ENCODE measurements at regions of chr15 and their contacts with region 1.

Region 1: GRCh38 chr15:65355173-65355987 is 22.4 kb downstream of the IGDCC3 start:
- DNase-seq: peak; percentile 74 to 77
- H3K4me3 ChIP-seq: peak overlapping the region; percentile 85
- H3K4me3 Mint-ChIP-seq: peak overlapping the region; percentile 75
- H3K27ac Mint-ChIP-seq: peak overlapping the region; percentile 86
- H3K4me1 ChIP-seq: peaks cover 20% of the 10 kb centered on the region
- H3K4me1 Mint-ChIP-seq: peaks cover 17% of the 10 kb centered on the region
- H3K27me3 ChIP-seq: no peaks in the 10 kb centered on the region
- H3K27me3 Mint-ChIP-seq: no peaks in the 10 kb centered on the region
- CTCF ChIP-seq: no peak

Region 2: DNA sequence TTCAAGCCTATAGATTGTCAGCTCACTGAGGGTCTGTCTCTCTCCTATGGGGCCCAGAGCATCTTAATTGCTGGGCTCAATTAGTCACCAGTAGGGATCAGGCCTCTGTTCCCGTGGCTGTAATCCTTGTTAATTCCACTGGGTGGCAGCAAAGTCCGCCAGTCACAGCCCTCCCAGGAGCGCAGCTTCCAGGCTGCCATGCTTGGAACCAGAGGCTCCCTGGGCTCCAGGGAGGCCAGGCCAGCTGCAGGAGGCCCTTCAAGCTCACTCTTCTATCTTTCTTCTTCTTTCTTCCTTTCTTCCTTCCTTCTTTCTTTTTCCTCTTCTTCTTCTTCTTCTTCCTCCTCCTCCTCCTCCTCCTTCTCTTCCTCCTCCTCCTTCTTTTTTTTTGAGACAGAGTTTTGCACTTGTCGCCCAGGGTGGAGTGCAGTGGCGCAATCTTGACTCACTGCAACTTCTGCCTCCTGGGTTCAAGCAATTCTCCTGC is 36.5 kb before region 1 on chr15:
- CTCF ChIA-PET with region 1: no interaction called
- POLR2A ChIA-PET with region 1: no interaction called
- intact Hi-C with region 1: loop called (anchors 2 kb)
- DNase-seq: peak; percentile 78 to 87
- H3K4me3 ChIP-seq: no peak overlapping the region
- H3K4me3 Mint-ChIP-seq: no peak overlapping the region
- H3K27ac Mint-ChIP-seq: no peak overlapping the region
- H3K4me1 ChIP-seq: no peaks in the 10 kb centered on the region
- H3K4me1 Mint-ChIP-seq: no peaks in the 10 kb centered on the region
- H3K27me3 ChIP-seq: no peaks in the 10 kb centered on the region
- H3K27me3 Mint-ChIP-seq: no peaks in the 10 kb centered on the region
- CTCF ChIP-seq: peak; percentile 71 to 91

Region 3: DNA sequence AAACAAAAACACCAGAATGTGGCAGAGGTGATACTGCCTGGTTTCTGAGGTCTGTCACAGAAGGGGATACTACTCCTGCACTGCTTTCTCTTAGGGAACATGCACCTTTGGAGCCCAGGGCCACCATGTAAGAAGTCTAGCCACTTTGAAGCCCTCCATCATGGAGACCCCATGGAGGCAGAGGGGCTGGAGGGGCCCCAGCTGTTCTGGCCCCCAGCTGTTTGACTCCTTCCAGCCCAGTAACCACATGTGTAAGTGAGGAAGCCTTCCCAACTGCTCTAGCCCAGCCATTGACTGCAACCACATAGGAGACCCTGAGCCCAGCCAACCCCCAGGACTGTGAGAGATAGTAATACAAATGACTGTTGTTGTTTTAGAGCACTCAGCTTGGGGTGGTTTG is 76.4 kb after region 1 on chr15:
- CTCF ChIA-PET with region 1: no interaction called
- POLR2A ChIA-PET with region 1: no interaction called
- intact Hi-C with region 1: no loop called
- DNase-seq: no peak
- H3K4me3 ChIP-seq: no peak overlapping the region
- H3K4me3 Mint-ChIP-seq: no peak overlapping the region
- H3K27ac Mint-ChIP-seq: no peak overlapping the region
- H3K4me1 ChIP-seq: no peaks in the 10 kb centered on the region
- H3K4me1 Mint-ChIP-seq: no peaks in the 10 kb centered on the region
- H3K27me3 ChIP-seq: no peaks in the 10 kb centered on the region; the same call in 1 of the 2 replicates
- H3K27me3 Mint-ChIP-seq: no peaks in the 10 kb centered on the region
- CTCF ChIP-seq: no peak